Activated CD4-positive, alpha-beta memory T cell treated with anti-CD3 and anti-CD28 coated beads, Interleukin-2, amount 10 ng/mL, durations not matched to agents 7 days and 5 days (primary cell): ENCODE measurements at regions of chr5 and their contacts with region 1.

Region 1: GRCh38 chr5:39148983-39149534 is 70.3 kb downstream of the FYB1 start:
- DNase-seq: no peak
- H3K4me3 Mint-ChIP-seq: no peak overlapping the region
- H3K27ac Mint-ChIP-seq: peak overlapping the region; percentile 45
- H3K4me1 Mint-ChIP-seq: peaks cover 56% of the 10 kb centered on the region
- H3K27me3 Mint-ChIP-seq: no peaks in the 10 kb centered on the region

Region 2: DNA sequence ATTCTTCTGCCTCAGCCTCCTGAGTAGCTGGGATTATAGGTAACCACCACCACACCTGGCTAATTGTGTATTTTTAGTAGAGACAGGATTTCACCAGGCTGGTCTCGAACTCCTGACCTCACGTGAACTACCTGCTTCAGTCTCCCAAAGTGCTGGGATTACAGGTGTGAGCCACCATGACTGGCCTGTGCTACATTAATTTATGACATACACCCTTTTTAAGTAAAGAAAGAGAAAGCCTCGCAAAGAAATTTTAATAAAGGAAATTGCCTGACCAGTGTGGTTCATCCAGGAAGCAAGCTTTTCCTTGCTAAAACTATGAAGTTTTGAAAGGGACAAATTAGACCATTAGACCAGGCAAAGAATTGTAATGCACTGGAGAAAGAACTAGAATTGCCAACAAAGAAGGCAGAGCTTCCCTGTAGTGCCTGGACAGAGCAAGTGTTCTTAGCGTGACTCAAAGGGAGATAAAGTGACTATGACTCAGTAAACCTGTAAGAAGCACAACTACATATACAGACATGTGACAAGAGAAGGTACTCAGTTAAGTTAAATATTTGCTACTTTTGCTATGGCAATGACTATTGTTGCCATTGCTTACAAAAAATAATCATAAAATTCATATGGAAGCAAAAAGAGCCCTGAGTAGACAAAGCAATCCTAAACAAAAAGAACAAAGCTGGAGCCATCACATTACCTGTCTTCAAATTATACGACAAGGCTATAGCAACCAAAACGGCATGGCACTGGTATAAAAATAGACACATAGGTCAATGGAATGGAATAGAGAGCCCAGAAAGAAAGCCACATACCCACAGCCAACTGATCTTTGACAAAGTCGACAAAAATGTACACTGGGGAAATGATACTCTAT is 15.7 kb after region 1 on chr5:
- CTCF ChIA-PET with region 1: no interaction called
- POLR2A ChIA-PET with region 1: interaction called, 30 read pairs
- DNase-seq: no peak
- H3K4me3 Mint-ChIP-seq: peak overlapping the region; percentile 60
- H3K27ac Mint-ChIP-seq: peak overlapping the region; percentile 79
- H3K4me1 Mint-ChIP-seq: peaks cover 85% of the 10 kb centered on the region
- H3K27me3 Mint-ChIP-seq: no peaks in the 10 kb centered on the region

Region 3: DNA sequence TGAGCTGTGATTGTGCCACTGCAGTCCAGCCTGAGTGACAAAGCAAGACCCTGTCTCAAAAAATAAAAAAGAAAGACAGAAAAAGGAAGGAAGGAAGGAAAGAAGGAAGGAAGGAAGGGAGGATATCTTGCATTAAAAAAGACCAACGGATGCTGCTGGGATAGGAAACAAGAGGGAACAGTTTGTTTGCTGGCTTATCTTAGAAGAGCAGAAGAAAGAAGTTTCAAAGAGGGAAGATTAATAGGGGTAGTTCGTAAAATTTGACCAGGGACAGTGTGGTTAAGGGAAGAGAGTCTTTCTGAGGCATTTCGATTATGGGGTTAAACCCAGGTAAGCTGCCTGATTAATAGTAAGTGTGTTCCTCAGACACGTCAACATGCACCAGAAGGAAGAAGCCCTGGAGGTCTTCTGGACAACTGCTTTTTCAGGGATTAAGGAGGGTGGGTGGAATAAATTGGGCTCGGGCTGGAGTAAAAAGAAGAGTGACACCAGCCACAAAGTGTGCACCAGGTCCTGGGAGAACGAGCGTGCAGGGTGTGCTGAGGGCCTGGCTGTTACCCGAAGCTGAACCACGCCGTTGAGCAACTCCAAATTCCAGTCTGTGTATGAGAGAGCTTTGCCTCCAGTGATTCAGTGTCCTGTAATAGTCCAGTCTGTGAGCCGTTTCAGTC is 45.5 kb after region 1 on chr5:
- CTCF ChIA-PET with region 1: no interaction called
- POLR2A ChIA-PET with region 1: interaction called, 14 read pairs
- DNase-seq: no peak
- H3K4me3 Mint-ChIP-seq: peak overlapping the region; percentile 76
- H3K27ac Mint-ChIP-seq: peak overlapping the region; percentile 79
- H3K4me1 Mint-ChIP-seq: peaks cover 77% of the 10 kb centered on the region
- H3K27me3 Mint-ChIP-seq: no peaks in the 10 kb centered on the region

Region 4: DNA sequence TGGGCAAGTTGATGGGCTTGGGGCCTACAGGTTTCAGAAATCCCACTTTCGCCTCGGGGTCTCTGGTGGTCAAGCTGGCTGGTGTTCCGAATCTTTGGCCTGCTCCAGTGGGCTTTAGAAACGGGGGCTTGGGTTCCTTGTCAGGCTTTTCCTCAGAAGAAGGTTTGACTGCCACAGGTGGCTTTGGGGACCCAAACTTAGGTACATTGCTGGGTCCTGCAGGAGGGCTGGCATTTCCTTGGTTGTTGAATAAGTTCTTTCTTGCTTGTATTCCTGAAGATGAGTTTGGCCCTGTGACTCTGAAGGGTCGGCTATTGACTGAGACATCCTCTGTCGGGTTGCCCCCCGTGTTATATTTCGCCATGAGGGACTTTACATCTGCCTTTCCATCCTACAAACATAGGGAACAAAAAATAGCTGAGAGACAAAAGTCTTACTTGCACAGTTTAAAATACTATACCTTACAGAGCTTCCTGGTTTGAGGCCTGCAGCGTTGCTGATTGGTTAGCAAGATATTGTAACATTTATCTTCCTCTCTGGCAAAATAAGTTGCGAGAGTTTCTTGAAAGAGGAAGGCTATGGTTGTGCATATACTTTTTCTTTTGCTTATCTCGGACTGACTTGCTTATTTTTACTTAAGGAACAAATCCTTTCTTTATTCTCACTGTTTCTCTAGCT is 53.7 kb after region 1 on chr5:
- CTCF ChIA-PET with region 1: interaction called, 6 read pairs
- POLR2A ChIA-PET with region 1: interaction called, 14 read pairs
- DNase-seq: peak; percentile 62
- H3K4me3 Mint-ChIP-seq: peak overlapping the region; percentile 96
- H3K27ac Mint-ChIP-seq: peak overlapping the region; percentile 97
- H3K4me1 Mint-ChIP-seq: peaks cover 40% of the 10 kb centered on the region
- H3K27me3 Mint-ChIP-seq: no peaks in the 10 kb centered on the region

Region 5: GRCh38 chr5:39283231-39283818 is 134.3 kb after region 1 on chr5:
- CTCF ChIA-PET with region 1: interaction called, 10 read pairs
- POLR2A ChIA-PET with region 1: no interaction called
- DNase-seq: peak; percentile 60
- H3K4me3 Mint-ChIP-seq: no peak overlapping the region
- H3K27ac Mint-ChIP-seq: no peak overlapping the region
- H3K4me1 Mint-ChIP-seq: peaks cover 16% of the 10 kb centered on the region
- H3K27me3 Mint-ChIP-seq: peaks cover 13% of the 10 kb centered on the region